Mucosa of descending colon (tissue), 3 donors: ENCODE measurements at regions of chr6 and their contacts with region 1.

Region 1: GRCh38 chr6:43506667-43507471 is 3.3 kb downstream of the LRRC73 start:
- DNase-seq: peak in 2 of 3 donors; percentile 79 to 92
- ATAC-seq: peak; percentile 68
- H3K4me3 ChIP-seq: no peak overlapping the region
- H3K4me1 ChIP-seq: peaks cover 17% of the 10 kb centered on the region
- CTCF ChIP-seq: peak; percentile 97

Region 2: DNA sequence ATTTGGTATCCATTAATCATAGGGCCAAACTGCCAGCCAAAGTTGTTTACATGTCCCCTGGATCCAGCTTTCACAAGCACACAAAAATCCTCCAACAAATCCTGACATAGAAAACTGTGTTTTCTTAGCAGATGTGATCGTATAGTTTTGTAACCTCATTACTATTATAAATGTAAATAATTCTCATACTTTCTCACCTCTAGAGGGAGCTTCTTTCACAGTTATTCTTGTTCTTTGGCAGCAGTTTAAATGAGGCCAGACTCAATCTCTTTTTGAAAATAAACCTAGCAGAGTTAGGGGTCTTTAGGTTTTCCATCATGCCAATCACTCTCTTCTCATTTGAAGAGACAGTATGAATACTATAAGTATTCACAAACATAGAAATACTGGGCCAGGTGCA is 120.4 kb before region 1 on chr6:
- intact Hi-C with region 1: loop called in 1 of 2 experiments (anchors 10 kb)
- DNase-seq: no peak
- ATAC-seq: no peak
- H3K4me3 ChIP-seq: no peak overlapping the region
- H3K4me1 ChIP-seq: no peaks in the 10 kb centered on the region
- CTCF ChIP-seq: no peak

Region 3: DNA sequence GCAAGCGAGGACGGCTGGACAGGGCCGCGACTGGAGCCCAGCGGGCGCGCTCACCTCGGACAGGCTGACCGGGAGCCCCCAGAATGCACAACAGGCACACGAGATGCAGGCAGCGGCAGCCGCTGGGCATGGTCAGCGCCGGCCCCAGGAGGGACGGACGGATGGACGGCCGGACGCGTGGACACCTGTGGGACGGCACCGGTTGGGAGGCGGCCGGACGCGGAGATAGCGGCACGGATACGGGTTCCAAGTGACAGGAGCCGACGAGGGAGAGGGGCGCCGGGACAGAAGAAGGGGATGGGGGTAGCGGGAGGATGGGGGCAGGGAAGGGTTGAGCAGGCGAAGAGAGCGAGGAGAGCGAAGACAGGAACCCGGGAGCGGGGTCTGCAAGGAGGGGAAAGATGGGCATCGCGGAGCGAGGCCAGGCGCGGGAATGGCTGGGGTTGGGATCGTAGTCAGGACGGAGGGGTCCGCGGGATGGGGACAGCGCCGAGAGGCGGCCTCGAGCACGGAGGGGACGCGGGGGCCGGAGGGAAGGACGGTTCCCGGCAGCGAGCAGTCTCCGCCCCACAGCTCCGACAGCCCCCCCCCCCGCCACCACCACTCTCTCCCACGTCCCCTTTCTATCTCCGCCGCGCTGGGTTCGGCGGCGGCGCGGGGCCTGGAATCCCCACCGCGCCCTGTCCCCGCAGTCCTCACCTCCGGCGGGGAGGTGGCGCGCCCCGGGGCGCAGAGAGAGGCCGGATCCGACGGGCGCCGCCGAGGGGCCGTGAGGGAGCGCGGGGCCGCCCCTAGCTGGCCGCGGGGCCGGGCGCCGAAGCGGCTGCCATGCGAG is 52.0 kb before region 1 on chr6:
- intact Hi-C with region 1: loop called (anchors 5 to 10 kb)
- DNase-seq: peak; percentile 83 to 91 (median 88)
- ATAC-seq: peak; percentile 54
- H3K4me3 ChIP-seq: no peak overlapping the region
- H3K4me1 ChIP-seq: peaks cover 8% of the 10 kb centered on the region
- CTCF ChIP-seq: no peak